Naive thymus-derived CD8-positive, alpha-beta T cell (primary cell): ENCODE measurements at regions of chr16 and their contacts with region 1.

Region 1: DNA sequence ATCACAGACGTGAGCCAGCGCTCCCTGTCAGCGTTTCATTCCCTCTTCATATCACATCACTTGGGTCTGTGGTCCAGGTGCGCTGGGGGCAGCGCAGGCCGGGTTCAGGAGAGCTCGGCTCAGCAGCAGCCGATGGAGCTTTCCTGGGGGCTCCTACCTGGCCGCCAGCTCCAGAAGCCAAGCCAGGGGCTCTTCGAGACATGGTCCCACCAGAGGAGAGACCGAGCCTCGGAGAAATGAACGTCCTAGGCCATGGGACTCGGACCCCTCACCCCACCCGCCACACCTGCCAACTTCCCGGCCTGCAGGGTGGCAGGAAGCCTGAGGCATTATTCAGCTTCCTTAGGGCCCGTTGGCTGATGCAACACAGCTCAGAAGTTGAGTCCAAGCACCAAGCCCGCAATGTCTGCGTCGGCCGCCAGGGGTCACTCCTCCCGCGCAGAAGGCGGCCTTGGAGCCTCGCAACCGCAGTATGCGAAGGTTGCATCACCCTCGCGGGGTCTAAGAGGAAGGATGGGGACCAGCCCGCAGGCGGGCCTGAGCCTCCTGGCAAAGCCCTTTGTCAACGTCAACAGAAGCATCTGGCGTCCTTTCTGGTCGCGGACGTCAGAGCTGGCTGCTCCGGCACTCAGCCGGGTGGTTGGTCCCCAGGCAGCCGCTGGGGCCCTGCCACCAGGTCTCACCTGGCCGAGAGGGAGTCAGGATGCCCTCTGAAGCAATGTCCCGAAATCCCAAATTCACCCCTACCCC is 13.2 kb upstream of the KLHDC4 start:
- DNase-seq: peak; percentile 83 to 93 (median 90)
- ATAC-seq: peak; percentile 85 to 87
- H3K4me3 Mint-ChIP-seq: peak overlapping the region in 9 of 10 donors; percentile 55 to 79 (median 62)
- H3K27ac Mint-ChIP-seq: peak overlapping the region; percentile 60 to 97 (median 90)
- H3K4me1 Mint-ChIP-seq: peaks cover 16 to 44% (median 40%) of the 10 kb centered on the region in 4 donors
- H3K27me3 Mint-ChIP-seq: no peaks in the 10 kb centered on the region

Region 2: DNA sequence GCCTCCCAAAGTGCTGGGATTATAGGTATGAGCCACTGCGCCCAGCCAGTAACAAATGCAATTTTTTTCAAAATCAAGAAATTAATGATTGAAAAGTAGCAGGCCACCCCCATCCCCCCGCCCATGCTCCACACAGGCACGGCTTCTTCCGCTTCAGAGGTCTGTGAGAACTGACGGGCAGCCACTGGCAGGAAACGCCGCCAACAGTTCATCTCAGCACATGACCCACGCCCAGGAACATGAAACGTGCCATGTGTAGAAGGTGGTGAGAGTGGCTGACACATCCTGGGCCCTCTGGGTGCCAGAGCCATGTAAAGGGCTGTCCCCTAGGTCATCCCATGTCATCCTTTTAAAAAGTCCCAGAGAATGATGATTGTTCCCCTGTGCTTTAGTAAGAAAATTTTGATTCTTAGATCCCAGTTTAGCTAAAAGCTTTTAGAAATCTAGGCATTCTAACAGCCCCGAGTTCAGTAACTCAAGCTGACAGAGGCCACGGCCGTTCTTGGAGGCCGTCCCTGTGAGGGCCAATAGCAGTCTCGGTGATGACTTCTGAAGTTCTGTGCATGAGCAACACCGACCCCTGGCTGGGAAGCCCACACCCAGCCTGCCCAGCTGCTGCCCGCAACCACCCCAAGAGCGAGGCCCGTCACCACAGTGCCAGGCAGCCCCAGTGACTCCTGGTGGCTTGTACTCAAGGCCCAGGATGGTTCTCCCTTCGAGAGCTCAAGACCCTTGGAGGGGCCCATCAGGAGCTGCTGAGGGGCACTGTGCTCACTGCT is 65.4 kb before region 1 on chr16:
- POLR2A ChIA-PET with region 1: no interaction called
- DNase-seq: peak in 9 of 10 donors; percentile 22 to 85 (median 54)
- ATAC-seq: peak; percentile 94 to 97
- H3K4me3 Mint-ChIP-seq: peak overlapping the region in 9 of 10 donors; percentile 29 to 80 (median 57)
- H3K27ac Mint-ChIP-seq: peak overlapping the region; percentile 25 to 98 (median 94)
- H3K4me1 Mint-ChIP-seq: peaks cover 10 to 53% (median 39%) of the 10 kb centered on the region in 4 donors
- H3K27me3 Mint-ChIP-seq: no peaks in the 10 kb centered on the region

Region 3: DNA sequence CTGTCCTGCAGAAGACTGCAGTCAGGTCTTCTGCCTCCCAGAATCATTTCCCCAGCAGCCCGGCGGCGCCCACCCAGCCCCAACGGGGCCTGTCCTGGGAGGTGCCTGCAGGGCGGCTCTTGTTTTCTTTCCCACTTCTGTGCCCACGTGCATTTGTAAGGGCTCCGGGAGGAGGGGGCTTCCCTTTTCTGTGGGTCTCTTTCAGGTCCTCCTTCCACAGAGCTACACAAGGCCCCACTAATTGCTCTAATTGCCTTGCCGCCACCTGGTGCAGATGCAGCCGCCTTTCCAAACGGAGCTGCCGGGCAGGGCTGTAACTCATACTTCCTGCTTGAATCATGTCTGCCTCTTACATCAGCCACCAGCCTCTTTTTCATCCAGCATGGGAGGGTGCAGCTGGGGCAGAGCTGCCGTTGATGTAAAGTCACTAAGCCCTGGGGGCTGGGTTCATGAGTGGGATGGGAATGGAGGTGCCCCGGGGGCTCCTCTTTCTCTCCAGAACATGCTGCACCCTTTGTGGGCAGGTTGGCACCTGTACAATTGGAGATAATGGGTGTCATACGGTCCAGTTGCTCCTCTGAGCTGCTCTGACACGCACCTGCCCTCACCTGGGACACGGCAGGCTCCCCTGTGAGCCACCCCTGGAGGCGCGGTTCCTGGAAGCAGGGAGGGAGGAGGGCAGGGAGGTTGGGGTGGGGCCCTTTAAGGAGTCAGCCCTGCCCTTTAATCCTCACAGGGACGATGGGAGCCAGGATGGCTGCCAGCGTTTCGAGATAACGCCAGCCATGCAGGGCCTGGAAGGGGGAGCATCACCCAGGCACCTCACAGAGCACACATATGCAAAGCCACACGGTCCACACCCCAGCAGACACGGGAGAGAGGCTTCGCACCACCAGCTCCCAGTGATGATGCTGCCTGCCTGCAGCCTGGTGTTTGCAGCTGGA is 27.9 kb after region 1 on chr16:
- POLR2A ChIA-PET with region 1: interaction called, 29 read pairs
- DNase-seq: peak in 9 of 10 donors; percentile 19 to 72 (median 46)
- ATAC-seq: peak; percentile 90 to 93
- H3K4me3 Mint-ChIP-seq: peak overlapping the region; percentile 83 to 99 (median 92)
- H3K27ac Mint-ChIP-seq: peak overlapping the region; percentile 84 to 98 (median 95)
- H3K4me1 Mint-ChIP-seq: peaks cover 8 to 52% (median 21%) of the 10 kb centered on the region in 4 donors
- H3K27me3 Mint-ChIP-seq: peaks cover 0 to 2% (median 0%) of the 10 kb centered on the region in 5 donors

Region 4: DNA sequence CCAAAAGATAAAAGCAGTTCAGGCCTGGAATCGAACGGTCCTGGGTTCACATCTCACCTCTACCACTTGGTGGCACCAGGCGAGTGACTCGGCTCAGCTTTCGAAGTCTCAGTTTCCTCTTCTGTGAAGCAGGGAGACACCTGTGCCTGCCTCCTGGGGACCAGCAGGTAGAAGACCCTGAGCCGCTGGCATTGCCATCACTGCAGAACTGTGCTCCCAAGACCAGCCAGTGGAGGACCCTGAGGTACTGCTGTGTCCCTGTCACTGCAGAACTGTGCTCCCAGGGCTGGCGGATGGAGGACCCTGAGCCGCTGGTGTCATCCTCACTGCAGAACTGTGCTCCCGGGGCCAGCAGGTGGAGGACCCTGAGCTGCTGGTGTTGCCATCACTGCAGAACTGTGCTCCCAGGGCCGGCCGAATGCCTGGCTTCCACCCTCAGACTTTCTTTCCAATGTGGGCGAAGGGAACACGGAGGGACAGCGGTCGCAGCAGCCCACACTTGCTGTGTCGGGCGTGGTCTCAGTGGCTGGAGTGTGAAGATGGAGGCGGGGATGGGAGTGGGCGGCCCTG is 99.0 kb after region 1 on chr16:
- POLR2A ChIA-PET with region 1: interaction called, 80 read pairs
- DNase-seq: no peak
- ATAC-seq: no peak
- H3K4me3 Mint-ChIP-seq: no peak overlapping the region
- H3K27ac Mint-ChIP-seq: no peak overlapping the region
- H3K4me1 Mint-ChIP-seq: peaks cover 3 to 15% (median 6%) of the 10 kb centered on the region in 4 donors
- H3K27me3 Mint-ChIP-seq: peaks cover 0 to 2% (median 0%) of the 10 kb centered on the region in 5 donors